Vagina (tissue), 2 donors: ENCODE measurements at regions of chr17 and their contacts with region 1.

Region 1: GRCh38 chr17:55717898-55718735 is 4.5 kb downstream of the TMEM100 start:
- DNase-seq: no peak
- H3K4me3 ChIP-seq: no peak overlapping the region
- H3K27ac ChIP-seq: no peak overlapping the region
- H3K4me1 ChIP-seq: peaks cover 10% of the 10 kb centered on the region
- H3K27me3 ChIP-seq: no peaks in the 10 kb centered on the region
- CTCF ChIP-seq: peak; percentile 43 to 69 (median 48)
- POLR2A ChIP-seq: no peak

Region 2: DNA sequence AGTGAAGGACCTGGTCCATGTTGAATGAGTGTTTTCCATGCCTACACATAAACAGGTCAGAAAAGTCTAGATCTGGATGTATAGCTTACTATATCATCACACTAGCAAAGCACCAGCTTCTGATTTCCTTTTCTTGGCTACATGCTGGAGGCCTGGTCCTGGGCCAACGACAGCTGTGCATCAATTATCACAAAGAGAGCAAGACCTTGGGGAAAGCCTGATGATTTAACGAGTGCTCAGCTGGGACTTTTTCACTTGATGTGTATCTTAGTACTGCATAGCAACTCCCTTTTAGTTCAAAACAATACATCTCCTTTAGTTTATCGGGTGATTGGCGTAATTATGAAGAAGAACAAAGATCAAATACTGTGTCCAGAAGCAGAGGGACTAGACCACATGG is 1537.2 kb before region 1 on chr17:
- intact Hi-C with region 1: no loop called
- DNase-seq: no peak
- H3K4me3 ChIP-seq: no peak overlapping the region
- H3K27ac ChIP-seq: no peak overlapping the region
- H3K4me1 ChIP-seq: no peaks in the 10 kb centered on the region
- H3K27me3 ChIP-seq: no peaks in the 10 kb centered on the region
- CTCF ChIP-seq: no peak
- POLR2A ChIP-seq: no peak

Region 3: DNA sequence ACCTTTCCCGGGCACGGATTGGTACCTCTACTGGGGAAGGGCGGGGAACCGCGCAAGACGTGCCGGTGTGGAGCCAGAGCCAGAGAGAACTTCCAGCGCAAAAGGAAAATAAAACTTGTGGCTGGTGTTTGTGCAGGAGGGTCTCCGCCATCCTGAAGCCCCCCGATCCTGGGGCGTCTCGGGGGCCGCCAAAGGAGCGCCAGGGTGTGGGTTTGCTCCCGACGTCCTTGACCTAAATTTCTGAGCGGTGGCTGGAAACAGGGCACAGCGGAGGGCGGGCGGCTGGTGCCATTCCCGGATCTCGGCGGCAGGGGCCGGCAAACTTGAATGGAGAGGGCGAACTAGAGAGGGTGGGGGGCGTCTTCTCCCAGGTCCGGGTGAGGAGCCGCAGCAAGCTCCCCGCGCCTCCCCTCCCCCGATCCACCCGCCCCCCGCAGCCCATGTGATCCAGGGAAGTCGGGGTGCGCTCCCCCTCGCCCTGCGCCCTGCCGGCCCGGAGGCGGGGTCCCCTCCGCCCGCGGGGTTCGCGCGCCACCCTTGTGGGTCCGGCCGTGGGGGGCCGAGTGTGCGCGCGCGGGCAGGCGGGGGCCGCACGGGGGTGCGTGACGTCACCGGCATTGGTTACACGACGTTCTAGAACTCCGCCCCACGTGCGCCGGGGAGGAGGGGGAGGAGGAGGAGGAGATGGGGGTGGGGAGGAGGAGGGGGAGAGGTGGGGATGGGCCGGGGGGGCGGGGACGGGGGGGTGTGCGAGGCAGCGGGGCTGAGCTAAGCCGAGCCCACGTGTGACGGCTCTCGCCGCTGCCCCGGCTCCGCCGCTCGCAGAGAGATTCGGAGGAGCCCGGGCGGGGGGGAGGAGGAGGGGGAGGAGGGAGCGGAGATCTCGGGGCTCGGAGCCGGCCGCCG is 1537.9 kb after region 1 on chr17 and contains the start of gene MSI2:
- intact Hi-C with region 1: loop called (anchors 10 kb)
- DNase-seq: peak in 1 of 2 donors; percentile 96
- H3K4me3 ChIP-seq: peak within 1 kb of the TSS; percentile 94 to 95
- H3K27ac ChIP-seq: peak within 1 kb of the TSS; percentile 98
- H3K4me1 ChIP-seq: peaks cover 29% of the 10 kb centered on the region
- H3K27me3 ChIP-seq: no peaks in the 10 kb centered on the region
- CTCF ChIP-seq: no peak
- POLR2A ChIP-seq: peak in 1 of 2 donors; percentile 73
- total RNA-seq, gene MSI2: 27.3 TPM